PC-3 (cell line): ENCODE measurements at regions of chr21 and their contacts with region 1.

Region 1: GRCh38 chr21:37452227-37452626 is 85.7 kb downstream of the DYRK1A start:
- DNase-seq: no peak
- ATAC-seq: no peak
- H3K4me3 ChIP-seq: no peak overlapping the region
- H3K27ac ChIP-seq: no peak overlapping the region
- H3K4me1 ChIP-seq: peaks cover 26% of the 10 kb centered on the region
- H3K27me3 ChIP-seq: no peaks in the 10 kb centered on the region
- CTCF ChIP-seq: no peak

Region 2: GRCh38 chr21:37257967-37258877 is 194.0 kb before region 1 on chr21:
- CTCF ChIA-PET with region 1: no interaction called
- POLR2A ChIA-PET with region 1: no interaction called
- intact Hi-C with region 1: loop called (anchors 10 kb)
- DNase-seq: peak; percentile 60
- ATAC-seq: peak; percentile 76
- H3K4me3 ChIP-seq: peak overlapping the region; percentile 69
- H3K27ac ChIP-seq: peak overlapping the region; percentile 84
- H3K4me1 ChIP-seq: peaks cover 15% of the 10 kb centered on the region
- H3K27me3 ChIP-seq: no peaks in the 10 kb centered on the region
- CTCF ChIP-seq: no peak

Region 3: DNA sequence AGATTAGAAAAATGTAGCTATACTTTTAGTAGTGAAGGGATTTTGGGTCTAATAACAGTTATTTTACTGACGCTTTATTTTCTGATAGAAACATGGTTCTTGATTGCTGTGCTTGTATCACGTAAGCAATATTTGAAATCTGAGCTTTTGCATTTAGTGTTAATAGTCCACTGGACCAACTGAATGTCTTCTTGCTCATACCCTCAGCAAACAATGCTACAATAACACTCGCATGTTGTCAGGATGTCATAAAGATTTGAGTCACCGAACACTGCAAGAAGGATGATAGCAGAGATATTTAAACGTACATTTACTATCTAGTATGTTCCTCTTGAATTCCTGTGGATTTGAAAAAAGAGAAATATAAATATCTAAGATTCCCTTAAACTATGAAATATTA is 78.2 kb before region 1 on chr21:
- CTCF ChIA-PET with region 1: no interaction called
- POLR2A ChIA-PET with region 1: no interaction called
- intact Hi-C with region 1: loop called (anchors 2 kb)
- DNase-seq: peak; percentile 94
- ATAC-seq: peak; percentile 80
- H3K4me3 ChIP-seq: peak overlapping the region; percentile 53
- H3K27ac ChIP-seq: peak overlapping the region; percentile 95
- H3K4me1 ChIP-seq: peaks cover 64% of the 10 kb centered on the region
- H3K27me3 ChIP-seq: no peaks in the 10 kb centered on the region
- CTCF ChIP-seq: no peak

Region 4: GRCh38 chr21:37478794-37479193 is 26.6 kb after region 1 on chr21:
- CTCF ChIA-PET with region 1: no interaction called
- POLR2A ChIA-PET with region 1: no interaction called
- intact Hi-C with region 1: no loop called
- DNase-seq: no peak
- ATAC-seq: no peak
- H3K4me3 ChIP-seq: no peak overlapping the region
- H3K27ac ChIP-seq: no peak overlapping the region
- H3K4me1 ChIP-seq: no peaks in the 10 kb centered on the region
- H3K27me3 ChIP-seq: no peaks in the 10 kb centered on the region
- CTCF ChIP-seq: no peak